Activated B cell treated with CpG ODN at 0.5 μM for 24 hours (primary cell): ENCODE measurements at regions of chr19 and their contacts with region 1.

Region 1: DNA sequence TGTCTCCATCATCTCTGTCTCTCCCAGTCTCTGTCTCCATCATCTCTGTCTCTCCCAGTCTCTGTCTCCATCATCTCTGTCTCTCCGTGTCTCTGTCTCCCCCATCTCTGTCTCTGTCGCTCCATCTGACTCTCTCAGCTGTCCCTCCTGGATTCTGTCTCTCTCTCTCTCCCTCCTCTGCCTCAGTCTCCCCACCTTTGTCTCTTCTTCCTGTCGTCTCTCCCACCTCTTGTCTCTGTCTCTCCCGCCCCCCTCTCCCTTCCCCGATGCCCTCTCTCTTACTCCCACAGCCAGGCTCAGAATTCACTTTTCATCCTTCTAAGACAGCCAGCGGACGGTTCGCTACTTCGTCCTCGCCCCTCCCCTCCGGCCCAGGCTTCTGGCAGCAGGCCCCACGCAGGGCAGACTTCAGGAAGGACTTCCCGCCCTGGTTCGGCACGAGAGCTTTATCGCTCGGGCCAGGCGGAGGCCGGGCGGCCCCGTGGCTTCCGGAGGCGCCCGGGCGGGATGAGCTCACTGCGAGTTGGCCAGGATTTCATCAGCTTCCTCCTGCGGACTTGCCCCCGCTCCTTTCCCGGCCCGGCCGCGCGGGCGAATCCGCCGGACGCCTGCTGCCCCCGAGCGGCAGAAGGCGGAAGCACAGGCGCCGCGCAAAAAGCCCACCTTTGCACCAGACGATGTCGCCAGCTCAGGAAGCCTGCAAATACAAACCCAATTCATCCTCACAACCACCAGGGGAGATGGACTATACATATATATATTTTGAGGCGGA is 12.4 kb upstream of the CCDC9 start:
- DNase-seq: peak; percentile 92
- ATAC-seq: peak; percentile 70
- H3K4me3 Mint-ChIP-seq: peak overlapping the region; percentile 86
- H3K27ac Mint-ChIP-seq: peak overlapping the region; percentile 90
- H3K4me1 Mint-ChIP-seq: peaks cover 29% of the 10 kb centered on the region
- H3K27me3 Mint-ChIP-seq: peaks cover 7% of the 10 kb centered on the region
- CTCF ChIP-seq: peak; percentile 47

Region 2: GRCh38 chr19:47075179-47075810 is 168.7 kb before region 1 on chr19:
- CTCF ChIA-PET with region 1: interaction called, 4 read pairs
- POLR2A ChIA-PET with region 1: no interaction called
- intact Hi-C with region 1: loop called (anchors 1 kb)
- DNase-seq: no peak
- ATAC-seq: no peak
- H3K4me3 Mint-ChIP-seq: no peak overlapping the region
- H3K27ac Mint-ChIP-seq: no peak overlapping the region
- H3K4me1 Mint-ChIP-seq: peaks cover 4% of the 10 kb centered on the region
- H3K27me3 Mint-ChIP-seq: no peaks in the 10 kb centered on the region
- CTCF ChIP-seq: no peak

Region 3: DNA sequence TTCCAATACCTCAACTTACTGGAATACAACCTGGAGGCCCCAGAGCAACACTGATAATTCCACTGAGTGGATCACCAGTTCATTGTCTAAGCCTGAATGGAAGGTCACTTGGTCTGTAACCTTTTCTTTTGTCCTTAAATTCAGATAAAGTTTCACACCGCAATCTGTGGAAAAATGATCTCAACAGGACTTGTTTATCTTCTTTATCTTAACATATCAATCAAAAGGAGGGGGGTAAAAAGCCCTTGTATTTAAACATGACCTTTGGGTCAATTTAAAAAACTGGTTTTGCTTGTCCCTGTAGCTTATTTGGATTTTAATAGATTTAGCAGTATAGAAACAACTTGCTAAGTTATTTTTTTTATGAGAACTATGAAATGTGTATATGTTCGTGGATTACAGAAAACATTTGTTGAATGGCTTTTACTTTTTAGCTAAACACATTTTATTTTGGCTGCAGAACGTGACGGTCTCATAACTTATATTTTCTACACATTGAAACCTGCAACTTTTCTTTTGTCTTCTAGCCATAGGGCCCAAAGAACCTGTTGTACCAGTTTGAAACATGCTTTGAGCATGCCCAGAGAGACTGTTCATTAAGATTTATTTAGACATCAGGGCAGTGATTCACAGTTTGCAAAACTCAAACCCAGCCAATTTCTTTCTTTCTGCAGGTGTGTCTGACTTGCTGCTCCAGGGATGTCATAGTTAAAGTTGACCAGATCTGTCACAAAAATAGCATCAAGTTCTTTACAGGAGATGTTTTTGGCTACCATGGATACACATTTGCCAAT is 91.5 kb before region 1 on chr19:
- CTCF ChIA-PET with region 1: interaction called, 36 read pairs
- POLR2A ChIA-PET with region 1: interaction called, 13 read pairs
- intact Hi-C with region 1: loop called (anchors 1 kb)
- DNase-seq: no peak
- ATAC-seq: no peak
- H3K4me3 Mint-ChIP-seq: no peak overlapping the region
- H3K27ac Mint-ChIP-seq: no peak overlapping the region
- H3K4me1 Mint-ChIP-seq: peaks cover 19% of the 10 kb centered on the region
- H3K27me3 Mint-ChIP-seq: no peaks in the 10 kb centered on the region
- CTCF ChIP-seq: no peak

Region 4: DNA sequence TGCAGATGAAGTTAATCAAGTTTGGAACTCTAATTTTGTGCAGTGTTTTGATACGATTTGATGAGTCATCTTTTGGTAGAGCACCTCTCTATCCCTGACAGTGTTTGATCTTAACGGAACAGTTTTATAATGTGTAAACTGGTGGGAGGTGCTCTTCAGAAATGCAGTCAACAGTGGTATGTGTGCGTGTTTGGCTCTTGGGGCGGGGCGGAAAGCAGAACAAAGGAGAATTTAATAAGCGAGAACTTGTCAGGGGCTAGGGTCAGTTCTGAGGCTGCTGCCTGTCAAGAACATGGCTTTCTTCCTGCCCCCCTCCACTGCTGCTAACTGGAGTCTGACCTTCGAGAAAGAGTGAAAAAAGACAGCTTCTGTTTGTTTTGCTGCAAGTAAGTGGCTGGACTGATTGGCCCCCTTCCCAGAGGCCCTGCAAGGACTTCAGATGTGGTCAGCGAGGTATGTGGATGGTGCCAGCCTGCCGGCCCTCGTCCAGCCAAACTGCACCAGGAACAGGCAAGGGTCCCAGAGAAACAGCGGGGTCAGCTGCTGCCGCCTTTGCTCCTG is 53.7 kb before region 1 on chr19:
- CTCF ChIA-PET with region 1: interaction called, 11 read pairs
- POLR2A ChIA-PET with region 1: interaction called, 16 read pairs
- intact Hi-C with region 1: no loop called
- DNase-seq: no peak
- ATAC-seq: no peak
- H3K4me3 Mint-ChIP-seq: no peak overlapping the region
- H3K27ac Mint-ChIP-seq: no peak overlapping the region
- H3K4me1 Mint-ChIP-seq: peaks cover 20% of the 10 kb centered on the region
- H3K27me3 Mint-ChIP-seq: no peaks in the 10 kb centered on the region
- CTCF ChIP-seq: no peak

Region 5: DNA sequence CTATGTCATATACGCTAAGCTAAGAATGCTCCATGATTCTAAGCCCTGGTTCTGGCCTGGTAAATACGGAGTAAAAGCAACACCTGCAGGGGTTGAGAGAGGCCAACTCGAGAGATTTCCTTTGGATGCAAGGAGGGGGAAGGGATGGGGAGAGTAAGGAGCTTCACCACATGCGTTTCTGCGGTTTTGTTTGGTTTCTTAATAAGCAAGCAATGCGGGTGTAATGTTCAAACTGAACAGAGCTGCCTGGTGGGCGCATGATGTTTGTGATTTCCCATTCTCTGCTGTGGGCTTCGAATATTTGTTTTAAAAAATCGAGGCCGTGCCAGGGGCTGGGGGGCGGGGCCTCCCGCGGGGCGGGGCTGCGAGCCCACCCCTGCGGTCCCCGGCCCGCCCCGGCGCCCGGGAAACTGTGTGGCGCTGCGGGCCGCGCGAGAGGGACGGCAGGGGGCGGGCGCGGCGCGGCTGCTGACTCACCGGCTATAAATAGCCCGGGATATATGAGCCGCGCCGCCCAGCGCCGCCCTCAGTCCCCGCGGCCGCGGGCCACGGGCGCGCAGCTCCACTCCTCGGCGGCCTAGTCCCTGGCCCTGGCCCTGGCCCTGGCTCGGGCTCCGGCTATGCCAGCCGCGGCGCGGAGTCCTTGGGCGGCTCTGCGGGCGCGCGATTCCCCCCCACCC is 18.1 kb before region 1 on chr19:
- CTCF ChIA-PET with region 1: interaction called, 51 read pairs
- POLR2A ChIA-PET with region 1: interaction called, 152 read pairs
- intact Hi-C with region 1: loop called (anchors 1 kb)
- DNase-seq: peak; percentile 94
- ATAC-seq: peak; percentile 61
- H3K4me3 Mint-ChIP-seq: peak overlapping the region; percentile 85
- H3K27ac Mint-ChIP-seq: peak overlapping the region; percentile 89
- H3K4me1 Mint-ChIP-seq: peaks cover 16% of the 10 kb centered on the region
- H3K27me3 Mint-ChIP-seq: no peaks in the 10 kb centered on the region
- CTCF ChIP-seq: no peak

Region 6: DNA sequence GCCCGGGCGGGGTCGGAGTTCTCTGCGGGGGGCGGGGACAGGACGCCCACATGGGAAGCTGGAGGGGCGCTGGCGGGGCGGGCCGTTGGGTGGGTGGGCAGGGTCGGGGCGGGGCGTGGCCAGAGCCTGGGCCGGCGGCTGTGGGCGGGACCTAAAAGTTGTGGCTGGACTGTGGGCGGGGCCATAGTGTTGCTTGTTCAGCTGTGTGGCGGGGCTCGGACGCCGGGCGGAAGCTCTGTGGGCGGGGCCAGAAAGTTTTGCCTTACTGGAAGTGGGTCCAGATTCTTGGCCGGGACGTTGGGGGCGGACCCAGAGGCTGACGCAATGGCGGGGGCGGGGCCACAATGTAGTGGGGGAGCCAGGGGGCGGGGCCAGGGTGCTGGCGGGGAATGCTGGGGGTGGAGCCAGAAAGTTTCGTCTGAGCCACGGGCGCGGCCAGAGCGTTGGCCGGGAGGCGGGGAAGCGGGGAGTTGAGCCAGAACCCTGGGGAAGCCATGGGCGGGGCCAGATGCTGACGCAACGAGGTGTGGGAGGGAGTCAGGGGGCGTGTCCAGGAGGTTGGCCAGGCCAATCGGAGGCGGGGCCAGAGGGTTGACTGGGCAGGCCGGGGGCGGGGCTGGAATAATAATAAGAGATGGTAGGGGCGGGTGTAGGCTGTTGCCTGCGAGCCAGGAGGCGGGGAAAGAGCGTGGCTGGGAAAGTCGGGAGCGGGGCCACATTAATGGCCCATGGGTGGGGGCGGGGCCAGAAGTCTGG is 12.9 kb after region 1 on chr19:
- CTCF ChIA-PET with region 1: interaction called, 18 read pairs
- POLR2A ChIA-PET with region 1: interaction called, 65 read pairs
- intact Hi-C with region 1: loop called (anchors 1 kb)
- DNase-seq: peak; percentile 99
- ATAC-seq: peak; percentile 82
- H3K4me3 Mint-ChIP-seq: peak overlapping the region; percentile 93
- H3K27ac Mint-ChIP-seq: peak overlapping the region; percentile 92
- H3K4me1 Mint-ChIP-seq: peaks cover 39% of the 10 kb centered on the region
- H3K27me3 Mint-ChIP-seq: no peaks in the 10 kb centered on the region
- CTCF ChIP-seq: no peak